ENCODE measurements at regions of chr1 and their contacts with region 1.

Region 1: DNA sequence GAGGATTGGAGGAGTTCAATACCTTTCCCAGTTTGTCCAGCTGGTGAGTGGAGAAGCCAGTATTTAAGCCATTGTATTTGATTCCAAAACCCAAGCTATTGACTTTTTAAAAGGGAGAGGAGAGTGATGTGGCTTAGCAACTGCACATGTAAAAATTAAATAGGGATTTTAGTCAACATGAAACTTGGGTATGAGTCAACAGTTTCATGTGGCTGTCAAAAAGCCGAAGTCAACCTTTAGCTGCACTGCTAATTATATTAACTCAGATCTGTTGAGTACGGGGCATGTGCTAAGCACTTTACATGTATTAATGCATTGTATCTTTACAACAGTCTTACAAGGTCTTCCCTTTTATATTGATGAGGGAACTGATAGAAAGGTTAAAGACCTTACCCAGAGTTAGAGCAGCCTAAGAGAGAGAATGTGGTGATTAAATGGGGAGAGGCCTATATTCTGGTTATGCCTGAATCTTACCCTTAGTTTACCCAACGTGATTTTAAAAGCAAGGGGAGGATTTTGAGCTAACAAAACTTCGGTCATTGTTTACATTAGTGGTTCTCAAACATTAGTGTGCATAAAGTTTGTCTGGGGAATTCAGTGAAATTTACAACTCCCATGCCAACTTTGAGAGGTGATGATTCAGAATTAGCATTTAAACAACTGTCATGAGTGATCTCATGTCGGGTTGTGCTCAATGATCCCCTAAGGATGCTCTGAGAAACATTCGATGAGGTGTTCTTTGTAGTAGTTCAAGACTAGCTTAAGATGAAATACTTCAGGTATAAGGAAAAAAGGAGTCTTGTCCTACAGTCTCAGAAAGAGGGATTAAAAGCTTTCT is 6.9 kb upstream of the SLC35F3 start:
- DNase-seq: no peak
- H3K4me3 ChIP-seq: no peak overlapping the region
- H3K27ac ChIP-seq: no peak overlapping the region
- H3K4me1 ChIP-seq: no peaks in the 10 kb centered on the region
- H3K27me3 ChIP-seq: no peaks in the 10 kb centered on the region
- CTCF ChIP-seq: no peak
- EP300 ChIP-seq: no peak
- POLR2A ChIP-seq: no peak

Region 2: GRCh38 chr1:235749755-235750300 is 1852.3 kb after region 1 on chr1:
- intact Hi-C with region 1: loop called in 1 of 4 experiments (anchors 5 kb)
- DNase-seq: no peak
- H3K4me3 ChIP-seq: no peak overlapping the region
- H3K27ac ChIP-seq: no peak overlapping the region
- H3K4me1 ChIP-seq: no peaks in the 10 kb centered on the region
- H3K27me3 ChIP-seq: no peaks in the 10 kb centered on the region
- CTCF ChIP-seq: no peak
- EP300 ChIP-seq: no peak
- POLR2A ChIP-seq: no peak

Measured in ovary (tissue), 10 donors.